ENCODE measurements at regions of chr2 and their contacts with region 1.

Region 1: GRCh38 chr2:222318026-222318711 is 19.4 kb upstream of the PAX3 start:
- DNase-seq: peak; percentile 69 to 74
- H3K4me3 ChIP-seq: peak overlapping the region; percentile 33 to 38 (median 38)
- H3K27ac ChIP-seq: peak overlapping the region in 1 of 3 donors; percentile 27
- H3K4me1 ChIP-seq: peaks cover 0 to 4% of the 10 kb centered on the region in 2 donors
- H3K27me3 ChIP-seq: peaks cover 3% of the 10 kb centered on the region
- CTCF ChIP-seq: peak in 4 of 6 experiments; percentile 44 to 71 (median 62)
- POLR2A ChIP-seq: peak in 1 of 2 donors; percentile 15

Region 2: DNA sequence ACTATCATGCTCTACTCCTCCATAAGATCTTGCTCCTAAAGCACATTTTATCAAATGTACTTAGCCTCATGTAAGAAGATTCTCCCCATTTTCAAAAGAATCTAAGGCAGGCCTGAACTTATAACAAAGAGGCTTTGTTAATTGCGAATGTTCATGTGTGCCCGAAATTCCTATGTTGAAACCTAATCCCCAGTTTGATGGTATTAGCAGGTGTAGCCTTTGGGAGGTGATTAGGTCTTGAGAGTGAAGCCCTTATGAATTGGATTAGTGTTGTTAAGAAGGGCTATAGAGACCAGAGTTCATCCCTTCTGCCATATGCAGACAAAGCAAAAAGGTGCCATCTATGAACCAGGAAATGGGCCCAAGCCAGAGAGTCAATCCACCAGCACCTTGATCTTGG is 253.9 kb before region 1 on chr2:
- intact Hi-C with region 1: loop called (anchors 10 kb)
- DNase-seq: no peak
- H3K4me3 ChIP-seq: no peak overlapping the region
- H3K27ac ChIP-seq: no peak overlapping the region
- H3K4me1 ChIP-seq: no peaks in the 10 kb centered on the region
- H3K27me3 ChIP-seq: no peaks in the 10 kb centered on the region
- CTCF ChIP-seq: no peak
- POLR2A ChIP-seq: no peak

Region 3: GRCh38 chr2:222404151-222404905 is 86.2 kb after region 1 on chr2:
- intact Hi-C with region 1: loop called (anchors 10 kb)
- DNase-seq: peak; percentile 81 to 83
- H3K4me3 ChIP-seq: no peak overlapping the region
- H3K27ac ChIP-seq: peak overlapping the region in 1 of 3 donors; percentile 30
- H3K4me1 ChIP-seq: peaks cover 7 to 15% of the 10 kb centered on the region in 2 donors
- H3K27me3 ChIP-seq: no peaks in the 10 kb centered on the region
- CTCF ChIP-seq: no peak
- POLR2A ChIP-seq: no peak

Region 4: GRCh38 chr2:222504719-222505118 is 186.6 kb after region 1 on chr2:
- intact Hi-C with region 1: no loop called
- DNase-seq: no peak
- H3K4me3 ChIP-seq: no peak overlapping the region
- H3K27ac ChIP-seq: no peak overlapping the region
- H3K4me1 ChIP-seq: no peaks in the 10 kb centered on the region
- H3K27me3 ChIP-seq: no peaks in the 10 kb centered on the region
- CTCF ChIP-seq: no peak
- POLR2A ChIP-seq: no peak

Region 5: GRCh38 chr2:222561817-222562645 is 243.9 kb after region 1 on chr2:
- intact Hi-C with region 1: loop called (anchors 10 kb)
- DNase-seq: peak; percentile 55 to 61
- H3K4me3 ChIP-seq: no peak overlapping the region
- H3K27ac ChIP-seq: peak overlapping the region in 2 of 3 donors; percentile 19
- H3K4me1 ChIP-seq: peaks cover 21 to 47% of the 10 kb centered on the region in 2 donors
- H3K27me3 ChIP-seq: no peaks in the 10 kb centered on the region
- CTCF ChIP-seq: peak in 5 of 6 experiments; percentile 35 to 90 (median 79)
- POLR2A ChIP-seq: no peak

Region 6: GRCh38 chr2:222613715-222614331 is 295.7 kb after region 1 on chr2:
- intact Hi-C with region 1: loop called (anchors 5 kb)
- DNase-seq: peak; percentile 11 to 16
- H3K4me3 ChIP-seq: no peak overlapping the region
- H3K27ac ChIP-seq: no peak overlapping the region
- H3K4me1 ChIP-seq: no peaks in the 10 kb centered on the region
- H3K27me3 ChIP-seq: no peaks in the 10 kb centered on the region
- CTCF ChIP-seq: peak; percentile 42 to 86 (median 78)
- POLR2A ChIP-seq: no peak

Measured in thyroid gland (tissue), 4 donors.